Heart right ventricle (tissue), 16 donors: ENCODE measurements at regions of chr4 and their contacts with region 1.

Region 1: GRCh38 chr4:155953151-155954114 is at the start of gene CTSO:
- DNase-seq: peak; percentile 75 to 79
- ATAC-seq: peak; percentile 95 to 99 (median 96)
- H3K4me3 ChIP-seq: peak within 1 kb of the TSS; percentile 65 to 91 (median 88)
- H3K27ac ChIP-seq: peak within 1 kb of the TSS; percentile 83 to 100 (median 99)
- H3K4me1 ChIP-seq: peaks cover 0 to 21% (median 8%) of the 10 kb centered on the region in 9 donors
- H3K27me3 ChIP-seq: no peaks in the 10 kb centered on the region
- CTCF ChIP-seq: peak; percentile 33 to 74 (median 62)
- total RNA-seq, gene CTSO: 6.1 to 21.4 (median 9.0) TPM

Region 2: GRCh38 chr4:155403886-155404285 is 549.5 kb before region 1 on chr4:
- intact Hi-C with region 1: loop called in 8 of 10 experiments (anchors 2 to 10 kb)
- DNase-seq: no peak
- ATAC-seq: peak in 5 of 8 donors; percentile 44 to 74 (median 61)
- H3K4me3 ChIP-seq: no peak overlapping the region
- H3K27ac ChIP-seq: no peak overlapping the region
- H3K4me1 ChIP-seq: no peaks in the 10 kb centered on the region
- H3K27me3 ChIP-seq: no peaks in the 10 kb centered on the region
- CTCF ChIP-seq: peak in 7 of 9 donors; percentile 42 to 72 (median 62)

Region 3: GRCh38 chr4:155809835-155810234 is 143.6 kb before region 1 on chr4:
- intact Hi-C with region 1: loop called in 9 of 10 experiments (anchors 1 to 5 kb)
- DNase-seq: peak in 1 of 2 donors; percentile 10
- ATAC-seq: peak in 7 of 8 donors; percentile 37 to 89 (median 71)
- H3K4me3 ChIP-seq: no peak overlapping the region
- H3K27ac ChIP-seq: no peak overlapping the region
- H3K4me1 ChIP-seq: no peaks in the 10 kb centered on the region
- H3K27me3 ChIP-seq: no peaks in the 10 kb centered on the region
- CTCF ChIP-seq: peak; percentile 39 to 83 (median 75)

Region 4: GRCh38 chr4:155866177-155866576 is 87.3 kb before region 1 on chr4 and contains the start of gene ASIC5:
- intact Hi-C with region 1: no loop called
- DNase-seq: no peak
- ATAC-seq: no peak
- H3K4me3 ChIP-seq: no peak within 1 kb of the TSS
- H3K27ac ChIP-seq: no peak within 1 kb of the TSS
- H3K4me1 ChIP-seq: no peaks in the 10 kb centered on the region
- H3K27me3 ChIP-seq: no peaks in the 10 kb centered on the region
- CTCF ChIP-seq: no peak
- total RNA-seq, gene ASIC5: not detected

Region 5: DNA sequence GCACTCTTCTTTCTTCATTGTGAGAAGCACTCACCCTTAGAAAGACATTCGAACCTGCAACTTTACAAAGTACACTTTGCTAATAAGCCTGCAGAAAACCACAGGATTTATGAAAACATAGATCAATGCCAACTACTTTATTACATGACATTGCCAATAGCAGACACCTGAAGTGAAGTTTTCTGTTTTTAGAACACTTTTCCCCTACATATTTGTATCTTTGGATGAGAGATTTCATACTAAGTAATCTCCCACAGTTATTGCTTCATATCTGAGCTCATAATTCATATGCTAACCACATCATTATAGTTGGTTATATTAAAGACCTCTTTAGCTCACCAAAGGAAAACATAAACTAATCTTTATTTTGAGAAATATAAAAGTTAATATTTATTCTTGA is 276.7 kb after region 1 on chr4:
- intact Hi-C with region 1: no loop called
- DNase-seq: no peak
- ATAC-seq: no peak
- H3K4me3 ChIP-seq: no peak overlapping the region
- H3K27ac ChIP-seq: no peak overlapping the region
- H3K4me1 ChIP-seq: no peaks in the 10 kb centered on the region
- H3K27me3 ChIP-seq: no peaks in the 10 kb centered on the region
- CTCF ChIP-seq: no peak